ENCODE measurements at regions of chr11 and their contacts with region 1.

Region 1: DNA sequence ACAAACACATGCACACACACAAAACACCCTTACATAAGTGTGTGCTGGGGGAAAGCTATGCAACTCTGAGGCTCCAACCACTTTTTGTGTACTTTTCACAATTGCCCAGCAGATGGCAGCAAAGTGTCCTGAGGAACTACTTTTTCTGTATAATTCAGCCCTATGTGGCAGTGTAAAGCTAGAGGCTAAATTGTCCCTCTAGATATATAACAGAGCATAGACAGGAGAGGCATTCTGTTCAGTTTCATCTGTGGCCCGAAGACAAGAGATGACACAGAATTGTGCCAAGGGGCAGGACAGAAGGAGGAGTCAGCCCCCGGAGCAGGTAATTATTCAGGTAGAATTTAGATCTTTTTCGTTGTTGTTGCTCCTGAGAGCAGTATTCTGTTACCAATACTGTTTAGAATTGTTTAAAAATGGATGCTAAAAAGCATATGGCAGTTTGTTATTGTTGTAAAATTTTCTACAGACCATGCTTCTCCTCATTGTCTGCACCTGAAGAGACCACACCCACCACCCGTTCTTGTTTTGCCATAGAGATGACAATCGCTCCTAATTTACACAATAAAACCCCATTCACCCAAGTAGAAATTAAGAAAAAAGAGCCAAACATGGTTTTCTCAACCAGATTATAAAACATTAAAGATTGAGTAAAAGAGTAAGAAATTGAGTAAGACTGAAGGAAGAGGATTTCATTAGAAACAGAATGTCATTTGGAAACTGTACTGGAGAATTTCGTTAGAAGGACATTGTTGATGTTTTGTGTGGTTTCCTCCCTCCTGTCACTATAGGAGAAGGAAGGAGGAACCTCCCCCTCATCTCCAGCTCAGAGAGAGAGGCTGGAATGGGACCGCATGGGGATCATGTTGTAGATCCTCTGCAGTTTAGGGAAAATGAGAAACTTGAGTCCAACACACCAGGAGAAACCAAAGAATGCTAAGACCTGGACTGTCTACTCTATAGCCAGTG is 14.5 kb upstream of the MS4A7 start:
- DNase-seq: peak in 32 of 35 experiments; percentile 10 to 75 (median 30)
- ATAC-seq: peak in 2 of 4 experiments; percentile 43 to 46
- H3K4me3 ChIP-seq: no peak overlapping the region
- H3K4me3 Mint-ChIP-seq: no peak overlapping the region
- H3K27ac ChIP-seq: no peak overlapping the region
- H3K27ac Mint-ChIP-seq: peak overlapping the region in 1 of 2 donors; percentile 47
- H3K4me1 ChIP-seq: no peaks in the 10 kb centered on the region
- H3K4me1 Mint-ChIP-seq: no peaks in the 10 kb centered on the region
- H3K27me3 ChIP-seq: peaks cover 0 to 9% of the 10 kb centered on the region in 2 experiments
- H3K27me3 Mint-ChIP-seq: peaks cover 16 to 23% of the 10 kb centered on the region in 2 donors

Region 2: DNA sequence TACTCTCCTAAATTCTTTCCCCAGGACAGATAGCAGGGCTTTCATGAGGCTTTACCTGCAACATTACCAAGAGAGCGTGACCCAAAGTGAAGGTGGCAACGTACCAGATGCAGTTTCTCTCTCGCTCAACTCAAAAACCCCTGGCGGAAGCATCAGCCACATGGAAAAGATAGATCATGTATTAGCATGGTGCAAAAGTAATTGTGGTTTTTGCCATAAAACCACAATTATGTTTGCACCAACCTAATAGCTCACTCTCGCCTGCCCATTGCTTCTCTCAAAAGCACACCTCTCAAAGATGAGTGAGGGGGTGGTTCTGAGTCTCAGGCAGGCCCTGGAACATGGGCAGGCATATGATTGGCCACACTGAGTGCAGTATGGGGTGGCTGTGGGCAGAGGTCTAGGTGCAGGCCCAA is 188.0 kb before region 1 on chr11:
- CTCF ChIA-PET with region 1: no interaction called
- POLR2A ChIA-PET with region 1: no interaction called
- DNase-seq: no peak
- ATAC-seq: peak in 1 of 4 experiments; percentile 6
- H3K4me3 ChIP-seq: no peak overlapping the region
- H3K4me3 Mint-ChIP-seq: no peak overlapping the region
- H3K27ac ChIP-seq: no peak overlapping the region
- H3K27ac Mint-ChIP-seq: no peak overlapping the region
- H3K4me1 ChIP-seq: no peaks in the 10 kb centered on the region
- H3K4me1 Mint-ChIP-seq: peaks cover 0 to 6% (median 0%) of the 10 kb centered on the region in 3 donors
- H3K27me3 ChIP-seq: peaks cover 0 to 3% of the 10 kb centered on the region in 2 experiments
- H3K27me3 Mint-ChIP-seq: peaks cover 10 to 11% of the 10 kb centered on the region in 2 donors

Region 3: GRCh38 chr11:60615497-60615896 is 251.7 kb after region 1 on chr11:
- CTCF ChIA-PET with region 1: interaction called, 10 read pairs
- POLR2A ChIA-PET with region 1: no interaction called
- DNase-seq: no peak
- ATAC-seq: no peak
- H3K4me3 ChIP-seq: no peak overlapping the region
- H3K4me3 Mint-ChIP-seq: no peak overlapping the region
- H3K27ac ChIP-seq: no peak overlapping the region
- H3K27ac Mint-ChIP-seq: no peak overlapping the region
- H3K4me1 ChIP-seq: no peaks in the 10 kb centered on the region
- H3K4me1 Mint-ChIP-seq: no peaks in the 10 kb centered on the region
- H3K27me3 ChIP-seq: peaks cover 0 to 4% of the 10 kb centered on the region in 2 experiments
- H3K27me3 Mint-ChIP-seq: peaks cover 9 to 14% of the 10 kb centered on the region in 2 donors

Region 4: DNA sequence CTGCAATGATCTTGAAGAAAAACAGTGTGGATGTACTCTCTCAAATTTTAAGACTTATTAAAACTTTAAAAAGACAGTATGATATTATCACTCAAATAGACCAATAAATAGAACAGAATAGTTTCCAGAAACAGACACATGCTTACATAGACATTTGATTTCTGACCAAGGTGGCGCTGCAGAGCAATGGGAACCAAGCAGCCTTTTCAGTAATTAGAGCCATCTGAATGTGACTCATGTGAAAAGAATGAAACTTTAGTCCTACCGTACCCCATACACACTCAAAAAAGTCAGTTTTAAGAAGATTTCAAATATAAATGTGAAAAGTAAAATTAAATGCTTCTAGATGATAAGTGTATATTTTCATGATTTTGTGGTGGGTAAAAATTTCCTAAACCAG is 261.4 kb after region 1 on chr11:
- CTCF ChIA-PET with region 1: interaction called in 1 of 2 experiments, 10 read pairs
- POLR2A ChIA-PET with region 1: no interaction called
- DNase-seq: no peak
- ATAC-seq: no peak
- H3K4me3 ChIP-seq: no peak overlapping the region
- H3K4me3 Mint-ChIP-seq: no peak overlapping the region
- H3K27ac ChIP-seq: no peak overlapping the region
- H3K27ac Mint-ChIP-seq: no peak overlapping the region
- H3K4me1 ChIP-seq: no peaks in the 10 kb centered on the region
- H3K4me1 Mint-ChIP-seq: no peaks in the 10 kb centered on the region
- H3K27me3 ChIP-seq: no peaks in the 10 kb centered on the region
- H3K27me3 Mint-ChIP-seq: no peaks in the 10 kb centered on the region